ENCODE measurements at regions of chr5 and their contacts with region 1.

Region 1: GRCh38 chr5:136636001-136636400 is 270.7 kb upstream of the TRPC7 start:
- DNase-seq: no peak
- H3K4me3 ChIP-seq: no peak overlapping the region
- H3K27ac ChIP-seq: no peak overlapping the region
- H3K4me1 ChIP-seq: 0 out of 2 replicates have a peak, but pooled peaks cover 3% of the 10 kb centered on the region
- H3K27me3 ChIP-seq: no peaks in the 10 kb centered on the region
- CTCF ChIP-seq: no peak

Region 2: DNA sequence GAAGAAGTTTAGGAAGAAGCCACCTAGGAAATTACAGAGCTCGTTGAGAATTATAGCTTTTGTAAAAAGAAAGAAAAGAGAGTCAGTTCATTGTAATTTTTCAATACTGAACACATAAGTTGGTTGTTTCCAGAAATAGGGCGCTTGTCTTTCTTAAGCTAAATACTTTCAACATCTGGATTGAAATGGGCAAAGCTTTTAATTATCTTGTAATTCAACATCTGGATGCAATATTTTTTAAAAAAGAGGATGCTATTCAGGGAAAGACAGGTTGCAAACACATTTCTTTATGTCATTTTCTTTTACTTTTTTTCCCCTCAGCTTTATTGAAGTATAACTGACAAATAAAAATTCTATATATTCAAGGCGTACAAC is 170.0 kb before region 1 on chr5:
- CTCF ChIA-PET with region 1: interaction called, 11 read pairs
- POLR2A ChIA-PET with region 1: no interaction called
- intact Hi-C with region 1: no loop called
- DNase-seq: no peak
- H3K4me3 ChIP-seq: peak overlapping the region; percentile 76; the same call in 1 of the 2 replicates
- H3K27ac ChIP-seq: no peak overlapping the region
- H3K4me1 ChIP-seq: peaks cover 10% of the 10 kb centered on the region; the same call in 1 of the 2 replicates
- H3K27me3 ChIP-seq: no peaks in the 10 kb centered on the region
- CTCF ChIP-seq: no peak

Region 3: GRCh38 chr5:136620016-136620419 is 16.0 kb before region 1 on chr5:
- CTCF ChIA-PET with region 1: no interaction called
- POLR2A ChIA-PET with region 1: no interaction called
- intact Hi-C with region 1: no loop called
- DNase-seq: peak; percentile 25 to 72
- H3K4me3 ChIP-seq: no peak overlapping the region
- H3K27ac ChIP-seq: peak overlapping the region; percentile 46
- H3K4me1 ChIP-seq: peaks cover 35% of the 10 kb centered on the region
- H3K27me3 ChIP-seq: no peaks in the 10 kb centered on the region
- CTCF ChIP-seq: no peak

Region 4: DNA sequence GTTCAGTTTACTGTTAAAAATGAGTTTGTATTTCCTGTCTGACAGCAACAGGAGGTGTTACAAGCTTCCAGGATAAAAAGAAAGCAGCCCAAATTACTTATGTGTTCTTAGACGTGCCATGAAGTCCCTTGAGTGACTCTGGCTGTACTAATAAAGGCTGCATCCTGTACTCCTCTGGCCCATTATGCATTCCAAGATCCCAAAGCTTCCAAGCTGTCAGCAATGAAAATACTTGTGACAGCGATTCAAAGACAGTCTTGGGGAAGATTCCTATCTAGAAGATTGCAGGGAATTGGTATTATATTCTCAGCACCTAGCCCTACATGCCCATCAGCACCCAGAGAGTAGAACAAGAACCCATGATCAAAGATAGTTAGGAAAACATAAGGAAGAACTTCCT is 10.9 kb after region 1 on chr5:
- CTCF ChIA-PET with region 1: no interaction called
- POLR2A ChIA-PET with region 1: no interaction called
- intact Hi-C with region 1: no loop called
- DNase-seq: no peak
- H3K4me3 ChIP-seq: no peak overlapping the region
- H3K27ac ChIP-seq: no peak overlapping the region
- H3K4me1 ChIP-seq: no peaks in the 10 kb centered on the region
- H3K27me3 ChIP-seq: no peaks in the 10 kb centered on the region
- CTCF ChIP-seq: no peak

Region 5: DNA sequence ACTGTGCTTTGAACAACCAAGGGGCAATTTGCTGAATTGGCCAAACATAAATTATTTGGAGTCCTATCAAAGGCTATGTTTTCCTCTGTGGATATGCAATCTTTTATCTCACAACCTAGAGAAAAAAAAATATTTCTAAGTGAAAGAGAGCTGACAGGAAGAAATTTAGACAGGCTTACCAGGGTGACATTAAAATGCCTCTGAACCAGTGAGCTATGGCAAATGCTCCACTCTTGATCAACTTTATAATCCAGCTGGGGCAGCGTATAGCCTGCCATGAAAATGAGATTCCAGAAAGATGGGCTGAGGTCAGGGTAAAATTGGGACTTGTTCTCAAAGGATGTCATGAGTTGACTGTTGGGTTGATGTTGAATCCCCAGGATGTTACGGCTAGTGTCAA is 128.6 kb after region 1 on chr5:
- CTCF ChIA-PET with region 1: no interaction called
- POLR2A ChIA-PET with region 1: no interaction called
- intact Hi-C with region 1: no loop called
- DNase-seq: no peak
- H3K4me3 ChIP-seq: no peak overlapping the region
- H3K27ac ChIP-seq: no peak overlapping the region
- H3K4me1 ChIP-seq: peaks cover 12% of the 10 kb centered on the region
- H3K27me3 ChIP-seq: no peaks in the 10 kb centered on the region
- CTCF ChIP-seq: no peak

Region 6: GRCh38 chr5:136802383-136802782 is 166.4 kb after region 1 on chr5:
- CTCF ChIA-PET with region 1: no interaction called
- POLR2A ChIA-PET with region 1: no interaction called
- intact Hi-C with region 1: no loop called
- DNase-seq: peak in 1 of 2 experiments; percentile 21
- H3K4me3 ChIP-seq: no peak overlapping the region
- H3K27ac ChIP-seq: no peak overlapping the region
- H3K4me1 ChIP-seq: no peaks in the 10 kb centered on the region
- H3K27me3 ChIP-seq: no peaks in the 10 kb centered on the region
- CTCF ChIP-seq: peak; percentile 67

Measured in PC-9 (cell line).